ENCODE measurements at regions of chr11 and their contacts with region 1.

Region 1: DNA sequence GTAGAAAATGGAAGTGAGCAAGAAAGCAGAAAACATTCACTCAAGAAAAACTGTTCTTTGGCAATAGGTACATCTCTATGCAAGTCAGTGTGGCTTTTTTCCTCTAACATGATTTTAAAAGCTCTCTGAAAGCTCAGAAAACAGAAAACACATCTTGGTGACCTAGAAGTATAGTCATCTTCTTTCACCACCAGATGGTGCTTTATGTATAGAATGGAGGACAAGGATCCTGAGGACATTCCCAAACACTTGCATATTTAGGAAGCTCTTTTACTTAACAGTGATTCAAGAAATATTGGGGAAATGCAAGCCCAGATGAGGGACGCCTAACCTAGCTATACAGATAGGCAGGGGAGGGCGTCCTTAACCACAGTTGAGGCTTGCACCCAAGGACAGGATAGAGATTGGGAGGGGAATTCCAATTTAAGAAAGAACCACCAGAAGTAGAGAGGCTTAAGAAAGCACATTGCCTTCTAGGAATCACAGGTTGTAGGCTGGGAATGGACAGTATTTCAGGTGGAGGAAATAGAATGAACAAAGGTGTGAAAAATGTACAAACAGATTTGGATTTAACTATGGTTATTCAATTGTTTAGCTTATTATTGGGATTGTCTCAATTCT is 13.8 kb upstream of the CCDC81 start:
- DNase-seq: peak in 1 of 2 experiments; percentile 65
- H3K4me3 ChIP-seq: no peak overlapping the region
- H3K27ac ChIP-seq: no peak overlapping the region
- H3K4me1 ChIP-seq: no peaks in the 10 kb centered on the region
- H3K27me3 ChIP-seq: no peaks in the 10 kb centered on the region
- CTCF ChIP-seq: peak; percentile 77

Region 2: DNA sequence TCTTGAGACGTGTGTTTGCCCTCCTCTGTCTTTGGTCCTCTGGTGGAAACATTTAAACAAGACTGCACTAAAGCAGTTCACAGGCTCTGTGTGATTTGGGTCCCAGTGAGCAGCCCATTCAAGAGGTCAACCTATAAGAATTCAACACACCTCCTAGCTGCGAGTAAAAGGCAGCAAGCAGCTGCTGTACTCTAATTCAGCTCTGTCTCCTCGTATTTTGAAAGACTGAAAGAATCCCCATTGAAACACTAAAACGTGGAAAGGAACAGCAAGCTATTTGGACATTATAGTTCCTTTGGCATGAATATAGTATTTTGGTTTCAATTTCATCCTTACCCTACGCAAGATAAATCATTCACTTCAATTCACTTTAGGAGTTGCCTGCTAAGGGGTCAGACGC is 1780.5 kb before region 1 on chr11:
- CTCF ChIA-PET with region 1: no interaction called
- POLR2A ChIA-PET with region 1: no interaction called
- intact Hi-C with region 1: no loop called
- DNase-seq: no peak
- H3K4me3 ChIP-seq: no peak overlapping the region
- H3K27ac ChIP-seq: no peak overlapping the region
- H3K4me1 ChIP-seq: no peaks in the 10 kb centered on the region
- H3K27me3 ChIP-seq: no peaks in the 10 kb centered on the region
- CTCF ChIP-seq: no peak

Region 3: GRCh38 chr11:85844426-85845129 is 516.3 kb before region 1 on chr11:
- CTCF ChIA-PET with region 1: no interaction called
- POLR2A ChIA-PET with region 1: no interaction called
- intact Hi-C with region 1: no loop called
- DNase-seq: peak; percentile 68 to 100
- H3K4me3 ChIP-seq: peak overlapping the region; percentile 22; the same call in 1 of the 2 replicates
- H3K27ac ChIP-seq: peak overlapping the region; percentile 94
- H3K4me1 ChIP-seq: peaks cover 29% of the 10 kb centered on the region
- H3K27me3 ChIP-seq: no peaks in the 10 kb centered on the region
- CTCF ChIP-seq: no peak

Region 4: DNA sequence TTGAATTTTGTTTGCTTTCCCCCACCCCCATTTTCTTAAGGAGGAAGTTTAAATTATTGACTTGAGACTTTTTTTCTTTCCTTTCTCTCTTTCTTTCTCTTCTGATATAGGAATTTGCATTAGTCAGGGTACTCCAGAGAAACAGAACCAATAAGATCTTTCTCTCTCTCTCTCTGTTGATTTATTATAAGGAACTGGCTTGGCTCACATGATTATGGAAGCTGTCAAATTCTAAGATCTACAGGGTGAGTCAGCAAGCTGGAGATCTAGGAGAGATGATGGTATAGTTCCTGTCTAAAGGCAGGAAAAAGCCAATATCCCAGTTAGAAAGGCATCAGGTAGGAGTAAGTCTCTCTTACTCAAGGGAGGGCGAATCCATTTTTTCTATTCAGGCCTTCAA is 77.8 kb after region 1 on chr11:
- CTCF ChIA-PET with region 1: no interaction called
- POLR2A ChIA-PET with region 1: no interaction called
- intact Hi-C with region 1: no loop called
- DNase-seq: peak in 1 of 2 experiments; percentile 52
- H3K4me3 ChIP-seq: no peak overlapping the region
- H3K27ac ChIP-seq: no peak overlapping the region
- H3K4me1 ChIP-seq: peaks cover 10% of the 10 kb centered on the region
- H3K27me3 ChIP-seq: no peaks in the 10 kb centered on the region
- CTCF ChIP-seq: no peak

Region 5: DNA sequence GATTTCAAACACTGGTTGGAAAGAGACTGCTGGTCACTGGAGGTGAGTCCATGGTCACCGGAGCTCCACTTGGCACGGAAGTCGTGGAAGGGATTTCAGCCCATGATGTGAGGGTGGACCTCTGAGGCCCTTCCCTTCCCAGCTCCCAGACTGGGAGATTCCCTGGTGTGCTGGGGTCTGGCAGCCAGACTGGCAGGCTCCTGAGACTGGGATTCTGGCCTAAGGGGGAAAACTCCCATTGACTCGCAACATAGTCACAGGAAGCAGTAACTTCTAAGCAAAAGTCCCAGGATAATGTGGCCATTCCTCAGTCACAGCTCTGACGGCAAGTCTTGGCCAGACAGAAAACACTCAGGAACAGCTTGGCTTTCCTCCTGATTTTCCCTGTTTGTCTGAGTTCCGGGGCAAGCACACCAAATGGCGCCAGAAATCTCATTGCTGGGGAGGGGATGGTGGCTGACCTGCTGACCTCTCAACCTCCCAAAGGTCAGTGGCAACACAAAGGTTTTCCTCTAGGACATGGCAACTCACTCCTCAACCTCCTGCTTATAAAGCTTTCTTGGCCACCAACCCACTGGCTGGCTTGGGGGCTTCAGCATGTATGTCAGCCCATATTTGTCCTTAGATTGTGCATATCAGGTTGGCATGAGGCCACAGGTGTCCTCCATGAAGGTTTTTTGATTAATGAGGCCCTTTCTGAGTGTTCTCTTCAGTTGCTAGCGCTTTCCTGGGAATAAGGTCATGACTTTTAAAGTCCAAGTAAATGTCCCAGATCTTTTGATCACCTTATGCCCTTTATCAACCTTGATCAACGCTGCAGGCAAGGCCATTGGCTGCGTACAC is 113.3 kb after region 1 on chr11:
- CTCF ChIA-PET with region 1: no interaction called
- POLR2A ChIA-PET with region 1: interaction called, 21 read pairs
- intact Hi-C with region 1: no loop called
- DNase-seq: no peak
- H3K4me3 ChIP-seq: no peak overlapping the region
- H3K27ac ChIP-seq: peak overlapping the region; percentile 43
- H3K4me1 ChIP-seq: peaks cover 25% of the 10 kb centered on the region
- H3K27me3 ChIP-seq: no peaks in the 10 kb centered on the region
- CTCF ChIP-seq: no peak

Measured in PC-9 (cell line).